Activated CD4-positive, alpha-beta T cell treated with anti-CD3 and anti-CD28 coated beads for 36 hours (primary cell): ENCODE measurements at regions of chr22 and their contacts with region 1.

Region 1: DNA sequence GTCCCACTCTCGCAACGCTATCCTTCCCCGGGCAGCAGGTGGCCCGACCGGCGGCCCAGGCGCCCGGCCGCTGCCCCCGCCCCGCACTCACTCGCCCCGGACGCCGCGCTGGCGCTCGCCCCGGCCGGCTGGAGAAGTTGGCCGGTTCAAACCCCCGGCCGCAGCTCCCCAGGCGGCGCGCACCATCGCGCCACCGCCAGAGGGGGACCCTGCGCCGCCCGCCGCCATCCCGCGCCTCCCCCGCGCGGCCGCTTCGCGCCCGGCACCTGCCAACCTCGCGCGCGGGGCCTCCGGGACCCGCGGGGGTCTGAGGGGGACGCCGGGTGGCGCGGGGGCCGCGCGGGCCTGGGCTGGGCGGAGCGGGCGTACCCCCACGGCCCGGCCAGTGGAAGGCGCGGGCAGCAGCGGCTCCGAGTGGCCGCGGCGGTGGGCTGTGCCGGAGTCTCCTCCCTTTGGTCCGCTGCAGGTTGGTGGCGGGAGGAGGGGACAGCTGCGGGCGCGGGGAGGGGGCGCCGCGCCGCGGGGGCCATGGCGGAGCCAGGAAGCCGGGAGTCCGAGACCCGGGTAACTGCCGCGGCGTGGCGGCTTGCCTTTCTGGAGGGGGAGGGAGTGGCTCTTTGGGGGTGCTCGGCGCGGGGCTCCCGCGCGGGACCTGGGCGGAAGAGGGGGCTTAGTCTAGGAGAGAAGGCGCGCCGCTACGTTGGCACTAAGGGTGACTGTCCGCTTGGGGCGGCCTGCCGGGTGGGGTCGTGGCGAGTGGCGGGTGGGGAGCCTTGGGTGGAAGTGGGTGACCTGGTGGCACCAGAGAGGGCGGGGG is at the starts of genes MPST and TST:
- DNase-seq: peak; percentile 60
- ATAC-seq: peak; percentile 74
- H3K4me3 Mint-ChIP-seq: peak within 1 kb of the TSS; percentile 78
- H3K27ac Mint-ChIP-seq: peak within 1 kb of the TSS; percentile 52
- H3K4me1 Mint-ChIP-seq: peaks cover 4% of the 10 kb centered on the region
- H3K27me3 Mint-ChIP-seq: peaks cover 13% of the 10 kb centered on the region
- total RNA-seq, gene MPST: 10.6 to 11.0 TPM
- total RNA-seq, gene TST: 1.8 to 2.1 TPM

Region 2: DNA sequence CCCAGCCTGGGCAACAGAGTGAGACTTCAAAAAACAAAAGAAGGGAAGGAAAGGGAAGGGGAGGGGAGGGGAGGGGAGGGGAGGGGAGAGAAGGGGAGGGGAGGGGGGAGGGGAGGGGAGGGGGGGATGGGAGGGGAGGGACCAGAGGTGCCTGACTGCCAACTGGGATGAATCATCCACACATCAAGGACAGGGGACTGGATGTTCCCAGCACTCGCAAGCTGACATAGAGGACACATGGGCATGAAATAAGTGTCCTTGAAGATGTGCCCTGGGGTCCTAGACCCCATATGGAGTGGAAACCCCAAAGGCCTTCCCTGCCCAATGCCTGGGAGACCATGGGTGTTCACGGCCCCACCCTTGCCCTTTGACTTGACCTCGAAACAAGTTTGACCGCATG is 20.1 kb before region 1 on chr22:
- CTCF ChIA-PET with region 1: interaction called, 15 read pairs
- POLR2A ChIA-PET with region 1: no interaction called
- intact Hi-C with region 1: no loop called
- DNase-seq: no peak
- ATAC-seq: no peak
- H3K4me3 Mint-ChIP-seq: no peak overlapping the region
- H3K27ac Mint-ChIP-seq: no peak overlapping the region
- H3K4me1 Mint-ChIP-seq: no peaks in the 10 kb centered on the region
- H3K27me3 Mint-ChIP-seq: peaks cover 2% of the 10 kb centered on the region

Region 3: GRCh38 chr22:37309211-37310074 is 289.9 kb after region 1 on chr22:
- CTCF ChIA-PET with region 1: no interaction called
- POLR2A ChIA-PET with region 1: no interaction called
- intact Hi-C with region 1: no loop called
- DNase-seq: peak; percentile 68
- ATAC-seq: peak; percentile 37
- H3K4me3 Mint-ChIP-seq: peak overlapping the region; percentile 26
- H3K27ac Mint-ChIP-seq: peak overlapping the region; percentile 98
- H3K4me1 Mint-ChIP-seq: peaks cover 80% of the 10 kb centered on the region
- H3K27me3 Mint-ChIP-seq: no peaks in the 10 kb centered on the region